ENCODE measurements at regions of chr9 and their contacts with region 1.

Region 1: GRCh38 chr9:91422758-91423711 is 597 bp downstream of the NFIL3 start:
- DNase-seq: peak; percentile 84
- ATAC-seq: peak; percentile 58

Region 2: DNA sequence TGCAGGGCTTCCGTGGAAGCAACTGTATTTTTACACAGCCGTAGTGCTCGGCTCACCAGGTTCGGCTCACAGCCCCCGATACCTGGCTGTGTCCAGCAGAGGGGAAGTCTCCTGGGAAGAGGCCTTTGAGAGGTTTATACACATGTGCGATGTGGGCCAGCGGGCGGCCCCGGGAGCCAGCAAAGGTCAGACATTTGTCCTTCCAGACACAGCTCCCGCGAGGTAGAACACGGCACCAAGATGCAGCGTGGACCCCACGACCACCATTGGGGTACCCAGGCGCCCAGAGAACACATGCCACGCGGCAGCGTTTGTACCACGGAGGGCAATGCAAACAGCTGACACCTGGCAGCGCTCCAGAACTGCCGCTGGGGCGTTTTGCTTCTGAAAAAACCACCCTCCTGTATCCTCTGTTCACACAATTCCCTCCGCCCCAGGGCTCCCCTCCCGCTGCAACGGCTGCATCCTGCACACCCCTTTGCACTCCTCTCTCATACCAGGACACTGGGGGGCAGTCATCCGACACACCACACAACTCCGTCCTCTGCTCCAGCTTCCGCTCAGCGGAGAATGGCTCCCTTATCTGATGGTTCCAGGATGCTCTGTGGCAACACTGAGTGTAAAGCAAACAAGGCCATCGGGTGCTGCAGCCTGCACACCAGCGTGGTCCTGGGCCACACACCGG is 386.1 kb before region 1 on chr9:
- intact Hi-C with region 1: loop called (anchors 10 kb)
- DNase-seq: peak; percentile 85
- ATAC-seq: peak; percentile 98

Region 3: DNA sequence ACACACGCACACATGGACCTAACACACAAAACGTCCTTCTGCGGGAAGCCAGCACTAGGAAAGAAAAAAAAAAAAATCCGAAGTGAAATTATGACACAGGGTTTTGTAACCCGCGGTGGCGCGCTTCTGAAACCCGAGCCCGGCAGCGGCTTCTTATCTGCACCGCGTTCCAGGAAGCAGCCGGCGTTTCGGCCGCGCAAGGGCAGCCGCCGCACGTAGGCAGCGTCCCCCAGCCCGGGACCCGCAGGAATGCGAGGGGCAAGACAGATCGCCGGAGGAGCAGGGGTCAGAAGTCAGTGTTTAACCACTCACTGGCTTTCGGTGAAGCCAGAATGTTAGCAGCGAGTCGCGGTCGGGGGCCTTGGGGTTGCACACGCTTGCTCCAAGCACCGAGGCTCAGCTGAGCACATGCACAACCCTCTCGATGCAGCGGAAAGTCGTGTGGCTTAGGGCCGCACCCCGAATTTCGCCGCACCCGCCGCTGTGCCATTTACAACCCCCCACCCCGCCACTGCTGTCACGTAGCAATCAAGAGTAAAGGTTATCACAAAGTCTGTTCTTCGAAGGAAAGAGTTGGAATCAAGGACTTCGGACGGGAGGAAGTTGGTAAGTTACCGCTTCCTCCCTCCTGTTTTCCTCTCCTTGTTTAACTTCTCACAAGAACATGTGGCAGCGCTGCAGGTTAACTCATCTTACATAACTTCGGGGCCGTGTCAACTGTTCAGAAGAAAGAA is 229.2 kb before region 1 on chr9:
- intact Hi-C with region 1: loop called (anchors 5 kb)
- DNase-seq: peak; percentile 88
- ATAC-seq: peak; percentile 57

Region 4: GRCh38 chr9:91361291-91362050 is 61.6 kb before region 1 on chr9 and contains the start of gene AUH:
- intact Hi-C with region 1: loop called (anchors 10 kb)
- DNase-seq: peak; percentile 92
- ATAC-seq: peak; percentile 97
- total RNA-seq, gene AUH: 28.7 TPM

Region 5: GRCh38 chr9:91489361-91489899 is 66.4 kb after region 1 on chr9:
- intact Hi-C with region 1: no loop called
- DNase-seq: no peak
- ATAC-seq: peak; percentile 22

Measured in sciatic nerve (tissue), 2 donors.